ENCODE measurements at regions of chr11 and their contacts with region 1.

Region 1: GRCh38 chr11:44899959-44900358 is 50.7 kb downstream of the TP53I11 start:
- DNase-seq: peak in 1 of 2 donors; percentile 51
- H3K4me3 ChIP-seq: no peak overlapping the region
- H3K27ac ChIP-seq: no peak overlapping the region
- H3K4me1 ChIP-seq: no peaks in the 10 kb centered on the region
- H3K27me3 ChIP-seq: no peaks in the 10 kb centered on the region
- CTCF ChIP-seq: no peak
- POLR2A ChIP-seq: no peak

Region 2: DNA sequence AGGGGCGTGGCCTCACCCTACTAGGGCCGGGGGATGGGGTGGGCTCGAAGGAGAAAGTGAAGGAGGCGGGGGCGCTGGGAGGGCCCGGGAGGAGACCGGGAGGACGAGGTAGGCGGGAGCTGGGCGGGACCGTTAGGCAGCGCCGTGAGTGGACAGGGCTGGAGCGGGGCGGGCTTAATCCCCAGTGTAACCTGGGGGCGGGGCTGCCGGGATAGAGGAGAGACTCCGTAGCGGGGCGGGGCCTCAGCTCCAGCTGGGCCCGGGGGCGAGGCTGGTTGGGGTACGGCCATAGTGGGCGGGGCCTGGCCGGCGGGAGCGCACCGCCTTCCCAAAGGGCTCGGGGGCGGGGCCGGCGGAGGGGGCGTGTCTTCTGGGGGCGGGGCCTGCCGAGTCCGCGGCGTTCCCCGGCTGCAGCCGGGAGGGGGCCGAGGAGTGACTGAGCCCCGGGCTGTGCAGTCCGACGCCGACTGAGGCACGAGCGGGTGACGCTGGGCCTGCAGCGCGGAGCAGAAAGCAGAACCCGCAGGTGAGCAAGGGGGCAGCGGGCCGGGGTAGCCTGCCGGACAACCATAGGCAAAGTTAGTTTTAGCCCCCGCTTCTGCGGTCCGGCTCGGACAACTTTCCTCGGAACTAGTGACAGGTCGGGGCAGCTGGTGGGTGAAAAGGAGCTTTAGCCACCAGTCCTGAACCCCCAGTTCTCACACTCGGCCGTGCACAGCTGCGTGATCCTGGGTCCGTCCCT is 334.6 kb before region 1 on chr11 and contains the start of gene CD82:
- intact Hi-C with region 1: loop called (anchors 10 kb)
- DNase-seq: peak; percentile 100
- H3K4me3 ChIP-seq: peak within 1 kb of the TSS; percentile 53 to 55
- H3K27ac ChIP-seq: peak within 1 kb of the TSS; percentile 93 to 94
- H3K4me1 ChIP-seq: peaks cover 0 to 4% of the 10 kb centered on the region in 2 donors
- H3K27me3 ChIP-seq: no peaks in the 10 kb centered on the region
- CTCF ChIP-seq: peak in 3 of 4 experiments; percentile 23 to 51 (median 41)
- POLR2A ChIP-seq: peak; percentile 38 to 51
- total RNA-seq, gene CD82: 10.2 to 26.3 (median 20.8) TPM

Region 3: GRCh38 chr11:44658506-44658850 is 241.5 kb before region 1 on chr11:
- intact Hi-C with region 1: no loop called
- DNase-seq: no peak
- H3K4me3 ChIP-seq: no peak overlapping the region
- H3K27ac ChIP-seq: no peak overlapping the region
- H3K4me1 ChIP-seq: no peaks in the 10 kb centered on the region
- H3K27me3 ChIP-seq: no peaks in the 10 kb centered on the region
- CTCF ChIP-seq: no peak
- POLR2A ChIP-seq: no peak

Region 4: DNA sequence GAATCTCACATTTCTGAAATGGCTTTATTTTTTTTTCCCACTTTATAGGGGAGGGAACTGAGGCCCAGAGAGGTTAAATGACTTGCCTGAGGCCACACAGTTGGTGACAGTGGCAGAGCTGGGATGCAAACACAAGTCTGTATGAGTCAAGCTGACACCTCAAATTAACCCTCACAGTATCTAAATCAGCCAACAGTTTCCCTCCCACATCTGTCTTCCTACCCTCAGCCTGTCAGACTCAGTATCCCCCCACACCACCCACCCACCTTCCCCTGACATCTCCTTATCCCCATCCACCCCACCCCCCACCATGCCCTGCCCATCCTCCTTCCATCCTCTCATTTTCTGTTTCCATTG is 44.5 kb before region 1 on chr11:
- intact Hi-C with region 1: no loop called
- DNase-seq: no peak
- H3K4me3 ChIP-seq: no peak overlapping the region
- H3K27ac ChIP-seq: peak overlapping the region; percentile 57 to 98
- H3K4me1 ChIP-seq: peaks cover 0 to 6% of the 10 kb centered on the region in 2 donors
- H3K27me3 ChIP-seq: no peaks in the 10 kb centered on the region
- CTCF ChIP-seq: no peak
- POLR2A ChIP-seq: no peak

Measured in uterus (tissue), 4 donors.